ENCODE measurements at regions of chr1 and their contacts with region 1.

Region 1: DNA sequence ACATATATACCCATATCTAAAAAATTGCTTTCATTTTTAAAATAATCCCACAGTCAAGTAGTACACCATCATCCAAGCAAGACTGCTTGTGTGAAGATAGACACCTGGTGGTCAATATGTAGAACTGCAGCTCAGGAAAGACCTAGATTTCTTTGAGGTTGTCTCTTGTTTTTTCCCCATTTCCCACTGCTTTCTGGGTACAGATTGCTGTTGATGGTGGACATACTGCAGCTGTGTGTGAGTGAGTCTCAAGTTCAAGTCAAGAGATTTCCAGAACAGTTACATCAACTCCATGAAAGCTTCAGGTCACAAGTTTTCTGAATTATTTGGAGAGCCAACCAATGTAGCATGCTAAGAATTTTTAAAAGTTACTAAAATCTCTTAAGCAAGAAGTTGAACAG is 306.4 kb downstream of the DUSP10 start:
- DNase-seq: peak; percentile 83
- ATAC-seq: peak; percentile 70
- H3K4me3 ChIP-seq: no peak overlapping the region
- H3K27ac ChIP-seq: no peak overlapping the region
- H3K4me1 ChIP-seq: peaks cover 4% of the 10 kb centered on the region
- H3K27me3 ChIP-seq: no peaks in the 10 kb centered on the region
- CTCF ChIP-seq: peak; percentile 90
- POLR2A ChIP-seq: no peak
- RAD21 ChIP-seq: peak; percentile 89

Region 2: GRCh38 chr1:220818421-220819173 is 616.9 kb before region 1 on chr1:
- CTCF ChIA-PET with region 1: no interaction called
- POLR2A ChIA-PET with region 1: no interaction called
- dilution Hi-C with region 1: no loop called
- in situ Hi-C with region 1: loop called (anchors 10 kb)
- intact Hi-C with region 1: loop called (anchors 2 kb)
- DNase-seq: peak; percentile 98
- ATAC-seq: peak; percentile 91
- H3K4me3 ChIP-seq: no peak overlapping the region
- H3K27ac ChIP-seq: peak overlapping the region; percentile 74; the same call in 1 of the 2 replicates
- H3K4me1 ChIP-seq: peaks cover 12% of the 10 kb centered on the region
- H3K27me3 ChIP-seq: peaks cover 11% of the 10 kb centered on the region
- CTCF ChIP-seq: no peak
- POLR2A ChIP-seq: no peak
- RAD21 ChIP-seq: no peak

Region 3: GRCh38 chr1:220879076-220879508 is 556.4 kb before region 1 on chr1 and contains the start of gene HLX:
- CTCF ChIA-PET with region 1: interaction called, 5 read pairs
- POLR2A ChIA-PET with region 1: interaction called, 4 read pairs
- dilution Hi-C with region 1: no loop called
- in situ Hi-C with region 1: no loop called
- intact Hi-C with region 1: loop called (anchors 1 kb)
- DNase-seq: peak; percentile 92
- ATAC-seq: peak; percentile 90
- H3K4me3 ChIP-seq: peak within 1 kb of the TSS; percentile 62
- H3K27ac ChIP-seq: peak within 1 kb of the TSS; percentile 83
- H3K4me1 ChIP-seq: peaks cover 9% of the 10 kb centered on the region
- H3K27me3 ChIP-seq: no peaks in the 10 kb centered on the region
- CTCF ChIP-seq: no peak
- POLR2A ChIP-seq: peak; percentile 59; the same call in 1 of the 2 replicates
- RAD21 ChIP-seq: no peak
- total RNA-seq, gene HLX: 3.9 and 4.3 TPM in 2 replicates

Region 4: DNA sequence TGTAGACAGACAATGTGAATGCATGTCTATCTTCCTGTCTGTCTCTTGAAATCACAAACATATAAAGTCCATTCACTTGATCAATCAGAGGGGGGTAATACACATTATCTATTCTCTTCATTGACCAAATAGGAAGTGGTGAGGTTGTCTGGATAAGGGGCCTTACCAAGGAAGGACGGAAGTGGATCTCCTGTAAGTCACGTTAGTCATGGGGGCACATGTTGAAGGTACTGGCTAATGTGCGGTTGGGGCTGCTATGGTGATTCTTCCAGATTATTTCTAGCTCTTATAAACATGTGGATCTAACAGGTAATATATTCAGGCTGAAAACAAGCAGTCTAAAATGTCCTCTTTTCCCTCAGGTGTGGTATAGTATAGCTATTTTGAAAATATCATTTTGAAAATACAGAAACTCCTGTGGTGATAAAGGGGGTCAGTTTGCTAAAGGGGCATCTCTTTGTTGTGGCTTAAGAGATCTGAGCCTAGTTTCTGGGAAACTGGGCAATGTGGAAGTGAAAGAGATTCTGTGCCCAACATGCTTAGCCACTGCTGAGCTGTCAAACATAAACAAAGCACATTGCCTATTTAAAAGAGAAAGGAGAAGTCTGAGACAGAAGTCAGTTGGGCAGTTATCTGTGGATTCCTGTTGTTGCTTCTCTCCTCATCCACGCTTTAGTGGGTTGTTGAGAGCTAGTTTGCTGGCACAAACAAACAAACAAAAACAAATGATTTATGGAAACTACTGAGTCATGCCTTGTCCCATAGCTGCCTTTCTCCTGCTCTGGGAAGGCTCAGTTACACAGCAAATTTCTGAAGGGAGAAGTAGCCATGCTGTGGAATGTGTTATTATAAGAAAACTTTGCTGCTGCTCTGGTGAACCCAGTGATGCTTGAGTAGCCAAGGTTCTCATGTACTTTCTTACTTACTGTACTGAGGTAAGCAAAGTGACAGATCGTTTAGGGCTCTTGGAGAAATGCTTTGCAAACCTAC is 389.4 kb before region 1 on chr1:
- CTCF ChIA-PET with region 1: interaction called, 4 read pairs
- POLR2A ChIA-PET with region 1: no interaction called
- dilution Hi-C with region 1: no loop called
- in situ Hi-C with region 1: no loop called
- intact Hi-C with region 1: loop called (anchors 10 kb)
- DNase-seq: peak; percentile 38
- ATAC-seq: peak; percentile 90
- H3K4me3 ChIP-seq: no peak overlapping the region
- H3K27ac ChIP-seq: peak overlapping the region; percentile 8; the same call in 1 of the 2 replicates
- H3K4me1 ChIP-seq: 0 out of 2 replicates have a peak, but pooled peaks cover 2% of the 10 kb centered on the region
- H3K27me3 ChIP-seq: no peaks in the 10 kb centered on the region
- CTCF ChIP-seq: no peak
- POLR2A ChIP-seq: no peak
- RAD21 ChIP-seq: no peak

Region 5: DNA sequence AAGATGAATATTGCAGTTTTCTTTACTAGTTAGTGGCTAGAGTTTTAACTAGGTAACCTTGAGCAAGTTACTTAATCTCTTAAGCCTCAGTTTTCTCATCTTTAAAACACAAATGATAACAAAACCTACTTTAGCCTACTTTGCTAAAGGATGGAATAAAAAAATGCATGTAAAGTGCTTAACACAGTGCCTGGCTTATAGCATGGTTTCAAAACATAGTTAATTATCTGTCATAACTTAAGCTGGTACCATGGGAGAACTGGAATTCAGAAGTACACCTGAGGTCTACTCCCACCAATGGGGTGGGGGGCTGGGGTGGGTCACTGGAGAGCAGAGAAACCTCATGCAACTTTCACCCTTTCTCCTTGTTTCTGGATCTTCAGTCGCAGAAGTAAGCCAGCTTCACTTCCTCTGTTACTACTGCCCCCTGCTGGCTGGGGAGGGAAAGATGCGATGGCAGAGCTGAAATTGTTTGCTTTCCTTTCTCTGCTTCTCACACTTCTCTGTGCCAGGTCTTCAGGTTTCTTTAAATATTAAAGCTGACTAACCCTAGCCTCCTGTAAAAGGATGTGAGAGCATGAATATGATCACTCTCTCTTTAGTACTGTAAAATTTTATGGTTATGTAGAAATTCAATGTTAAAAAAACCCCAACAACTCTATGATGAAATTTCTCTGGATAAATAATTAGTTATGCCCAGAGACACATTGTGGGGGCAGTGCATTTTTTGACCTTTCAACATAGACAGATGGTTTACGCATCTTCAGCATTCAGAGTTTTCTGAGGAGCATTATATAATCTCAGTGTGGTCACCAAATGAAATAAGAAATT is 232.1 kb before region 1 on chr1:
- CTCF ChIA-PET with region 1: no interaction called
- POLR2A ChIA-PET with region 1: no interaction called
- dilution Hi-C with region 1: no loop called
- in situ Hi-C with region 1: no loop called
- intact Hi-C with region 1: loop called (anchors 1 kb)
- DNase-seq: peak; percentile 74
- ATAC-seq: peak; percentile 78
- H3K4me3 ChIP-seq: no peak overlapping the region
- H3K27ac ChIP-seq: no peak overlapping the region
- H3K4me1 ChIP-seq: no peaks in the 10 kb centered on the region
- H3K27me3 ChIP-seq: no peaks in the 10 kb centered on the region
- CTCF ChIP-seq: peak; percentile 89
- POLR2A ChIP-seq: no peak
- RAD21 ChIP-seq: peak; percentile 90

Region 6: DNA sequence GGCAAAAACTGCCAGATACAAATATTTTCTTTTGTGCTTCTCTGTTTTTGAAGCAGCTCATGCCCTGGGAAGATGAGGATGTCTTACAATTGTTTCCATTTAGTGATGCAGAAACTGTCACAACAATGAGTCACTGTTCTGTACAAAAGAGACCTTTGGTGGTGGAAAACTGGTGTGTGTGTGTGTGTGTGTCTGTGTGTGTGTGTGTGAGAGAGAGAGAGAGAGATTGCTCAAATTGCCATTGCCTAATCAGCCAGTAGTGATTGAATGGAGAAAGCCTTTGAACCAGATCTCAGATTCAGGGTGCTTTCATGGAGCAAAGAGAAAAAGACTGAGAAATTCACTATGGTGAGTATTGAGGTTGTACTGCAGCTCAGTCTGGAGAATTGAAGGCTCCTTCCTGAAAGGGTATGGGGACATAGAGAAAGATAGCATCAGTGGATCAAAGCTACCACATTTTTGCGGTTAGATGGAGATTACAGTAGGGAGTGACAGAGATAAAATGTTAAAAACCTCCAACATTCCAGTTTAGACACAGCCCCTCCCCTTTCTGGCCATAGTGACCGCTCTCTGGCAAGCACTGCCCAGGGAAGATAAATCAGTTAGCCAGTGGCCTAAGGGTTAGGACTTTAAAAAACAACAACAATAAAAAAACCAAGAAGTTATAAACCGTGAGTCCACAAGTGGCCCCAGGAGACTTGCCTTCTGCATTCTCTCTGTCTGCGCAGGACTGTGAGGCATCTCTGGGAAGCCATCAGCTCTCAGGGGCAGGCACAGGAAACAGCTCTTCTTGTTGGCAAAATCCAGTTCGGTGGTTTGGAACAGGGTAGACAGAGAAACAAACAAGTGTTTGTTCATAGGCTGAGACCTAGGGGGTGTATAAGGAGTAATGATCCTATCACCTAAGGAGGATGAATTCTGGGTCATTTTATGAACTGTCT is 100.1 kb before region 1 on chr1:
- CTCF ChIA-PET with region 1: interaction called, 4 read pairs
- POLR2A ChIA-PET with region 1: no interaction called
- dilution Hi-C with region 1: no loop called
- in situ Hi-C with region 1: no loop called
- intact Hi-C with region 1: loop called (anchors 5 kb)
- DNase-seq: peak; percentile 69
- ATAC-seq: peak; percentile 79
- H3K4me3 ChIP-seq: no peak overlapping the region
- H3K27ac ChIP-seq: peak overlapping the region; percentile 85
- H3K4me1 ChIP-seq: peaks cover 15% of the 10 kb centered on the region
- H3K27me3 ChIP-seq: no peaks in the 10 kb centered on the region
- CTCF ChIP-seq: no peak
- POLR2A ChIP-seq: no peak
- RAD21 ChIP-seq: no peak

Region 7: DNA sequence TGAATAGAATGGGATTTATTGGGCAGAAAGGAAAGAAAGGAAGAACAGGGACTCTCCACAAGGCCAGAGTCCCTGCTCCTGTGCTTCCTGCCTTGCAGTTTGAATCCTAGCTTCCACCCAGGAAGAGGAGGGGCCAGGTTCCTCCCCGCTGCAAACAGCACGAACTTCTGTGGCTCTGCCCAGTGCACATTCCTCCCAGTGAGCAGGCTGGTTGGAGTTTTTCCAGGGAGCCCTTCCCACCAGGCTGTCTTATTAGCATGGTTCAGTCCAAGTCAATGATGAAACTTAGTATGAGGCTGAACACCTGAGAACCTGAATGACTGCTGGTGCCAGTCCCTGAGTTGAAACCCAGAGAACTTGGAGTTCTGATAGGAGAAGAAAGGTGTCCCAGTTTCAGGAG is 59.2 kb after region 1 on chr1:
- CTCF ChIA-PET with region 1: no interaction called
- POLR2A ChIA-PET with region 1: no interaction called
- dilution Hi-C with region 1: no loop called
- in situ Hi-C with region 1: no loop called
- intact Hi-C with region 1: no loop called
- DNase-seq: peak; percentile 21
- ATAC-seq: no peak
- H3K4me3 ChIP-seq: no peak overlapping the region
- H3K27ac ChIP-seq: no peak overlapping the region
- H3K4me1 ChIP-seq: peaks cover 2% of the 10 kb centered on the region; the same call in 1 of the 2 replicates
- H3K27me3 ChIP-seq: no peaks in the 10 kb centered on the region
- CTCF ChIP-seq: no peak
- POLR2A ChIP-seq: no peak
- RAD21 ChIP-seq: no peak

Region 8: DNA sequence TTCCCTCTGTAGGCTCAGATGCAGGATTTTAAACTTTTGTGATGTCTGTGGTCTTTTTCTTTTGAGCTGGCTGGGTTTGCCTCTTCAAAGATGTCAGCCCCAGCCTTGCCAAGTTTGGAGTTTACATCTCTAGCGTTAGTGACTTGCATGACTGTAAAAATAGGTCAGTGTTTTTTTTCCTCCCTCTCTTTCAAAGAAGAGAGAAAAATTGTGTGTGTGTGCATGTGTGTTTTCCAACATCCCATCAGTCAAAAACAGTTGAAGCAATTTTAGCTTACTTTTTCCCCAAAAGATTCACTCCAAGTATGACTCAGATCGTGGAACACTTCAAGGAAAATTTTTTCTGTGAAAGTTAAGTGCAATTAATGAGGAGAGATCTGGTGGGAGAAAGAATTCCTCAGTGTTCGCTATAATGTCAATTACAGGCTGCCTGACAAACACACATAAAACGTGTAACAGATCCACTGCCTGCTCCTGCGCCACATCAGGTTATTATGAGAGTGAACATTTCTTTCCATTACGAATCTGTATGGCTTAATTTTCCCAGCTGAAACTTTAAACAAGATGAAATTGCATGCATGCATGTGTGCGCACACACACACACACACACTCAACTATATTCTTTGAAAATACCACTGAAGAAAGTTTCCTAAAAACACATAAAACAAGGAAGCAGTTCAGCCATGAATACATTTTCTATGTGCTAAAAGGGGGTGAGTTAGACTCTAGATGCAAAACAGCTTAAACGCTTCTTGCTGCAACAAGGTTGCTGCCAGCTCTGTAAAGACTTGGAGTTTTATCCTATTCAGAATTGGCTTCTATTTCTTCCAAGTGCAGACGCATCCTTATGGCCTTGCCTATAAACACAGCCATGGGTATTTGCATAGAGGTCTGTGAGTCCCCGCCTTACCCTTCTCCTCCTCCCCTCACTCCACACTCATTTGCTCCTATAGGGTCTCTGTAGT is 1652.1 kb after region 1 on chr1:
- CTCF ChIA-PET with region 1: no interaction called
- POLR2A ChIA-PET with region 1: no interaction called
- dilution Hi-C with region 1: no loop called
- in situ Hi-C with region 1: no loop called
- intact Hi-C with region 1: loop called (anchors 5 kb)
- DNase-seq: peak; percentile 20
- ATAC-seq: no peak
- H3K4me3 ChIP-seq: no peak overlapping the region
- H3K27ac ChIP-seq: no peak overlapping the region
- H3K4me1 ChIP-seq: no peaks in the 10 kb centered on the region
- H3K27me3 ChIP-seq: peaks cover 52% of the 10 kb centered on the region
- CTCF ChIP-seq: no peak
- POLR2A ChIP-seq: no peak
- RAD21 ChIP-seq: no peak

Measured in IMR-90 (cell line).